B cell (primary cell): ENCODE measurements at regions of chr1 and their contacts with region 1.

Region 1: DNA sequence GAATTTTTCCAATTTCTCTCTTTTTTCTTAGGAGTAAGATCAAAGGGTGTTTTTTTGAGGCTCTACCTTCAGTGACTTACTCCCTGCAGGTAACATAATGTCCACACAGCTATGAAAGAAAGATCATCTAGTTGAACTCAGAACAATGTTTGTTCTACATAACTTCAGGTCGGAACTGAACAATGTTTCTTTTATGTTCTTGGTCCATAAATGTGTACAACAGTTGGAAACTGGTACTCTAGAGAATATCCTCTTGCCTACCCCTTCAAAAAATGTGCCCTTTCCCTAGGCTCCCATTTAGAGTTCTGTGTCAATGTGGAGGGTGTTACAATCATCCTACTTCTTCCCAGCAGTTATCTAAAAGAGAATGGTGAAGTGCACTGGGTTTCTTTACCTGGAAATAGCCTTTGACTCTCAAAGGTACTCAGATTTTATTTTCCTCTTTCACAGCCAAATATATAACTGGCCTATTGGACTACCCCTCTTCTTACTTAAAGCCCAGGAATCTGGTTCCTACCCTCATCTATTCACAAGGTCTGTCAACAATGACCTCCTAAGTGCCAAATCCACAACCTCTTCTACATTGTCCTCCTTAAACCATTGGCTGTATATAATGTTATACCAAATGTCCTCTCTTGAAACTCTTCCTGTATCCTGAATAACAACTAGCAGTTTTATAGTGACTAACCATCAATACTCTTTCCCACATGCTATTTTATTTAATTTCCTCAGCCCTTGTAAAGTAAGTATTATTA is 42.3 kb downstream of the CD58 start:
- DNase-seq: no peak
- ATAC-seq: no peak
- H3K4me3 ChIP-seq: no peak overlapping the region
- H3K4me3 Mint-ChIP-seq: no peak overlapping the region
- H3K27ac ChIP-seq: no peak overlapping the region
- H3K27ac Mint-ChIP-seq: no peak overlapping the region
- H3K4me1 ChIP-seq: no peaks in the 10 kb centered on the region
- H3K4me1 Mint-ChIP-seq: no peaks in the 10 kb centered on the region
- H3K27me3 ChIP-seq: no peaks in the 10 kb centered on the region
- H3K27me3 Mint-ChIP-seq: no peaks in the 10 kb centered on the region
- CTCF ChIP-seq: no peak

Region 2: GRCh38 chr1:116474921-116475849 is 53.3 kb before region 1 on chr1:
- CTCF ChIA-PET with region 1: no interaction called
- POLR2A ChIA-PET with region 1: no interaction called
- intact Hi-C with region 1: no loop called
- DNase-seq: no peak
- ATAC-seq: no peak
- H3K4me3 ChIP-seq: no peak overlapping the region
- H3K4me3 Mint-ChIP-seq: no peak overlapping the region
- H3K27ac ChIP-seq: no peak overlapping the region
- H3K27ac Mint-ChIP-seq: no peak overlapping the region
- H3K4me1 ChIP-seq: no peaks in the 10 kb centered on the region
- H3K4me1 Mint-ChIP-seq: no peaks in the 10 kb centered on the region
- H3K27me3 ChIP-seq: no peaks in the 10 kb centered on the region
- H3K27me3 Mint-ChIP-seq: no peaks in the 10 kb centered on the region
- CTCF ChIP-seq: no peak

Region 3: DNA sequence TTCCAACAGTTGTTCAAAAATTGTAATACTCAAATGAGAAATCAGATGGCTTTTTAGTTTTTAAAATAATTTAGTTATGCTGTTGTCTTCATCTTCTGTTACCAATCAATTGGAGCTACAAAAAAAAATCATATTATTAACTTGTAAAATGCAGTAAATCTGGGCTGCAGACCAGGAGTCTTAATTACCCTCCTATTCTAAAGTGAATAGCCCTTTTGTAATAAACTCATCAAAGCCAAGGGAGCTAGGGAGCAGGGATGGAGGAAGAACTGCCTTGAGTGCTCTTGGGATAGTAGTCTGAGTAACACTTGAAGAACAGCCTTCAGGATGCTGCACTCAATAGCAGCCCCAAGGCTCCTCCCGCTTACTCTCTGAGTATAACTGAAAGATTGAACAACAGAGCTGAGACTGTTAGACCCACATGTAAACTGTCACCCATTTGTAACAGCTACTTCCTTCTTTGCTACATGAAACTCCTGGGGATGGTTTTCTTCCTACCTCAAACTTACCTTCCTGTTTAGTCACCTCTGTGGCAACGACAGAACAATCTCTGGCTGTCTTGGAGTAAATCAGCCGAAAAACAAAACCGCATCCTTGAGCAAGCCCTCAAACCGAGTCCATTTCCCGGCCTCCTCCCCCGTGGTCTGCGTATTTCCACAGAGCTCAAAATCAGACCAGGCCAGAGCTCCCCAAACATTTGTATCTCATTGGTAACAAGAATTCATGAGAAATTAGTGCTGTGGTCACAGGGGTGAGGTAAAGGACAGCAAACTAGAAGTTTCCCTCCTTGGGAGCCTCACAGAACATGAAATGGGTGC is 13.6 kb before region 1 on chr1:
- CTCF ChIA-PET with region 1: no interaction called
- POLR2A ChIA-PET with region 1: no interaction called
- intact Hi-C with region 1: no loop called
- DNase-seq: peak; percentile 67
- ATAC-seq: peak; percentile 71
- H3K4me3 ChIP-seq: peak overlapping the region in 3 of 5 experiments; percentile 1 to 47 (median 9)
- H3K4me3 Mint-ChIP-seq: peak overlapping the region; percentile 83
- H3K27ac ChIP-seq: peak overlapping the region; percentile 72 to 86
- H3K27ac Mint-ChIP-seq: peak overlapping the region; percentile 96
- H3K4me1 ChIP-seq: peaks cover 20 to 26% of the 10 kb centered on the region in 2 donors
- H3K4me1 Mint-ChIP-seq: peaks cover 47% of the 10 kb centered on the region
- H3K27me3 ChIP-seq: no peaks in the 10 kb centered on the region
- H3K27me3 Mint-ChIP-seq: no peaks in the 10 kb centered on the region
- CTCF ChIP-seq: no peak

Region 4: DNA sequence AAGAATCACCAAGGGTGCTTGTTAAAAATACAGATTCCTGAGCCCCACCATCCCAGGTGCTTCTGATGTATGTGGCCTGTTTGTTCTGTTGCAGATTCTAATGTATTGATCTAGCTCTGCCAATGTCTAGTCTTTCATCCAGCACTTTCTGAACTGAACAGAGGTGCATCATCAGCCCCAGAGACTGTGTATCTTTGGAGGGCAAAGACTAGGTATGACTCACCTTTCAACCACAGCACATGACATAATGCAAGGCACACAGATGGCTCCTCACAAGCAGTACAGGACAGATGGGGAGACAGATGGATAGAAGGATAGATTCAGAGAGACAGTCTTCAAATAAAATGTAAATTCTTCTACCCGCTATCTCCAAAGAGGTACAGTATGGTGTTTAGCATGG is 10.0 kb after region 1 on chr1:
- CTCF ChIA-PET with region 1: interaction called, 4 read pairs
- POLR2A ChIA-PET with region 1: no interaction called
- intact Hi-C with region 1: loop called (anchors 1 kb)
- DNase-seq: no peak
- ATAC-seq: peak; percentile 68
- H3K4me3 ChIP-seq: no peak overlapping the region
- H3K4me3 Mint-ChIP-seq: no peak overlapping the region
- H3K27ac ChIP-seq: no peak overlapping the region
- H3K27ac Mint-ChIP-seq: peak overlapping the region; percentile 16
- H3K4me1 ChIP-seq: peaks cover 11 to 19% of the 10 kb centered on the region in 2 donors
- H3K4me1 Mint-ChIP-seq: peaks cover 49% of the 10 kb centered on the region
- H3K27me3 ChIP-seq: no peaks in the 10 kb centered on the region
- H3K27me3 Mint-ChIP-seq: no peaks in the 10 kb centered on the region
- CTCF ChIP-seq: no peak

Region 5: DNA sequence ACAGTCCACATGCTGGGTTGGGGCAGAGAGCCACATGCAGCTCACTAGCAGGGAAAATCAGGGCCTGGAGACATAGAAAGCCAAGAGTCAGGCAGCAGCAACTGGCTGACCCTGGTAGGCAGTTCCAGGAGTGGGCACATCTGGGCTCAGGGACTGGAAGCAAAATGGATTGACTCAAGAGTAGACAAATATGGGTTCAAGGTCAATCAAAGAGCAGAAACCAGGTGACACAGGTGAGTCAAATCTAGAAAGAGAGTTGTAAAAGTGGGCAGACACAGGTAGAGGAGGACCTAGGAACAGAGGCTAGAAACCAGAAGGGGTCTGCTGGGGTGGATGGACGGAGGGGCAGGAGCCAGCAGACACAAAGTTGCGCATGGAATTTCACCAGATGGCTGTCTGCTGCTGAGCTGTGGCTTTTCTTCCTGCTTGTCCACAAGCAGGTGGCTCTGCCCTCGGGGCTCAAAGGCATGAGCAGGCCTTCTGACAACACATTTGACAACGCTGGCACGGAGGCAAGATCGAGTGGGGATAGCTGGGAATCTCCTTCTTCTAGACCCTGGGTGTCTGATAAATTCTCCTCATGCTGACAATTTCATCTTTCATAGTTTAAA is 179.9 kb after region 1 on chr1:
- CTCF ChIA-PET with region 1: no interaction called
- POLR2A ChIA-PET with region 1: no interaction called
- intact Hi-C with region 1: no loop called
- DNase-seq: no peak
- ATAC-seq: no peak
- H3K4me3 ChIP-seq: no peak overlapping the region
- H3K4me3 Mint-ChIP-seq: no peak overlapping the region
- H3K27ac ChIP-seq: no peak overlapping the region
- H3K27ac Mint-ChIP-seq: no peak overlapping the region
- H3K4me1 ChIP-seq: no peaks in the 10 kb centered on the region
- H3K4me1 Mint-ChIP-seq: no peaks in the 10 kb centered on the region
- H3K27me3 ChIP-seq: no peaks in the 10 kb centered on the region
- H3K27me3 Mint-ChIP-seq: peaks cover 13% of the 10 kb centered on the region
- CTCF ChIP-seq: no peak